CD4-positive, alpha-beta T cell (primary cell): ENCODE measurements at regions of chr10 and their contacts with region 1.

Region 1: GRCh38 chr10:5776136-5776880 is 36.9 kb downstream of the GDI2 start:
- DNase-seq: no peak
- ATAC-seq: peak; percentile 2
- H3K4me3 ChIP-seq: peak overlapping the region; percentile 25
- H3K4me3 Mint-ChIP-seq: peak overlapping the region; percentile 74
- H3K27ac ChIP-seq: peak overlapping the region; percentile 58 to 71
- H3K27ac Mint-ChIP-seq: peak overlapping the region; percentile 92
- H3K4me1 ChIP-seq: peaks cover 31% of the 10 kb centered on the region
- H3K4me1 Mint-ChIP-seq: peaks cover 64% of the 10 kb centered on the region
- H3K27me3 ChIP-seq: no peaks in the 10 kb centered on the region
- H3K27me3 Mint-ChIP-seq: no peaks in the 10 kb centered on the region
- CTCF ChIP-seq: no peak

Region 2: GRCh38 chr10:5551531-5552375 is 224.6 kb before region 1 on chr10:
- CTCF ChIA-PET with region 1: no interaction called
- POLR2A ChIA-PET with region 1: no interaction called
- intact Hi-C with region 1: no loop called
- DNase-seq: peak in 9 of 14 experiments; percentile 16 to 64 (median 34)
- ATAC-seq: no peak
- H3K4me3 ChIP-seq: no peak overlapping the region
- H3K4me3 Mint-ChIP-seq: peak overlapping the region; percentile 28
- H3K27ac ChIP-seq: no peak overlapping the region
- H3K27ac Mint-ChIP-seq: peak overlapping the region; percentile 91
- H3K4me1 ChIP-seq: peaks cover 62% of the 10 kb centered on the region
- H3K4me1 Mint-ChIP-seq: peaks cover 8% of the 10 kb centered on the region
- H3K27me3 ChIP-seq: no peaks in the 10 kb centered on the region
- H3K27me3 Mint-ChIP-seq: no peaks in the 10 kb centered on the region
- CTCF ChIP-seq: no peak

Region 3: GRCh38 chr10:5764422-5765297 is 11.6 kb before region 1 on chr10:
- CTCF ChIA-PET with region 1: interaction called, 4 read pairs
- POLR2A ChIA-PET with region 1: interaction called, 17 read pairs
- intact Hi-C with region 1: no loop called
- DNase-seq: no peak
- ATAC-seq: peak; percentile 39
- H3K4me3 ChIP-seq: no peak overlapping the region
- H3K4me3 Mint-ChIP-seq: no peak overlapping the region
- H3K27ac ChIP-seq: no peak overlapping the region
- H3K27ac Mint-ChIP-seq: peak overlapping the region; percentile 82
- H3K4me1 ChIP-seq: no peaks in the 10 kb centered on the region
- H3K4me1 Mint-ChIP-seq: peaks cover 10% of the 10 kb centered on the region
- H3K27me3 ChIP-seq: no peaks in the 10 kb centered on the region
- H3K27me3 Mint-ChIP-seq: no peaks in the 10 kb centered on the region
- CTCF ChIP-seq: no peak

Region 4: DNA sequence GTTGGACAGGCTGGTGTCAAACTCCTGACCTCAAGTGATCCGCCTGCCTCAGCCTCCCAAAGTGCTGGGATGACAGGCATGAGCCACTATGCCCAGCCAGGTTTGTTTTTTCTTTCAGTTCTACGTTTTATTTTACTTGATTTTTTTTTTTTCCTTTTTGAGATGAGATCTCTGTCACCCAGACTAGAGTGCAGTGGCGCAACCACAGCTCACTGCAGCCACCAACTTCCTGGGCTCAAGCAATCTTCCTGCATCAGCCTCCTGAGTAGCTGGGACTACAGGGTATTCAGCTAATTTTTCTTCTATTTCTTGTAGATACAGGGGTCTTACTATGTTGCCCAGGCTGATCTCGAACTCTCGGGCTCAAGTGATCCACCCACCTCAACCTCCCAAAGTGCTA is 12.7 kb after region 1 on chr10:
- CTCF ChIA-PET with region 1: no interaction called
- POLR2A ChIA-PET with region 1: interaction called, 17 read pairs
- intact Hi-C with region 1: loop called in 1 of 2 experiments (anchors 2 kb)
- DNase-seq: peak in 3 of 14 experiments; percentile 8 to 14 (median 11)
- ATAC-seq: peak; percentile 78
- H3K4me3 ChIP-seq: no peak overlapping the region
- H3K4me3 Mint-ChIP-seq: peak overlapping the region; percentile 48
- H3K27ac ChIP-seq: peak overlapping the region in 1 of 2 donors; percentile 21
- H3K27ac Mint-ChIP-seq: peak overlapping the region; percentile 88
- H3K4me1 ChIP-seq: peaks cover 10% of the 10 kb centered on the region
- H3K4me1 Mint-ChIP-seq: peaks cover 44% of the 10 kb centered on the region
- H3K27me3 ChIP-seq: no peaks in the 10 kb centered on the region
- H3K27me3 Mint-ChIP-seq: no peaks in the 10 kb centered on the region
- CTCF ChIP-seq: no peak

Region 5: DNA sequence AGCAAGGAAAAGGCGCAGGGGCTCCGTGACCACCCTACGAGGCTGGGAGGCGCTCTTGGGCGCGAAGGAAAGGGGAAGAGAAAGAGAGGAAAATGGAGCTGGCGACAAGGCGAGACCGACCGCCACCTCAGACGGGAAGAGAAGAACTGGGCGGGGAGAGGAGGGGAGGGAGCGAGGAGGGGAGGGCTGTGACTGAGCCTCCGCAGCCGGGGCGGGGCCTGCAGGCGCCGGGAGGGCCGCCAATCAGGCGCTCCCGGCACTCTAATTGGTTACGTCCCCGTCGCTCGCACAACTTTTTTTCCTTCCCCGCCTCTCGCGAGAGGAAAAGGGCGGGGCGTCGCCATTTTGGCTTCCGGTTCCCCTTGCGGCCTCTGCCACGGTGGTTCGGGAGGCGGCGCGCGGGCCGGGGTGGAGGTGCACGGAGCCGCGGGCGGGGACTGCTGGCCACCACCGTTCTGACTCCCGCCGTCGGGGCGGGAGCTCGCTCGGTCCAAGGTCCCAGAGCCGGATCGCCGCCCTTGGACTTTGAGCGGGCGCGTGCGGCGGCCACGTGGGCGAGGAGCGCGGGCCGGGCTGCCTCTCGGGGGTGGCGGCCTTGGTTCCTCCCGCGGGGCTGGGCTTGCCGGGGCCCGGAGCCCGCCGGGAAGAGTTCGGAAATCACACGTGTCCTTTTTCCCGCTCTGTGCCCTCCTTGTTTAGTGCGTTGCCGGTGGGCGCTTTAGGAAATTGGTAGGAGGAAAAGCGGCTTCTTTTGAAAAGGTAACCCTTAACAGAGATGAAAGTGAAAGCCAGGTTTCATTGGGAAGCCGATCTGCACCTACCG is 37.2 kb after region 1 on chr10 and contains the start of gene GDI2:
- CTCF ChIA-PET with region 1: no interaction called
- POLR2A ChIA-PET with region 1: interaction called, 29 read pairs
- intact Hi-C with region 1: loop called (anchors 1 to 5 kb)
- DNase-seq: peak; percentile 92 to 98 (median 96)
- ATAC-seq: peak; percentile 94
- H3K4me3 ChIP-seq: peak within 1 kb of the TSS; percentile 74
- H3K4me3 Mint-ChIP-seq: peak within 1 kb of the TSS; percentile 95
- H3K27ac ChIP-seq: peak within 1 kb of the TSS; percentile 92 to 97
- H3K27ac Mint-ChIP-seq: peak within 1 kb of the TSS; percentile 89
- H3K4me1 ChIP-seq: peaks cover 42% of the 10 kb centered on the region
- H3K4me1 Mint-ChIP-seq: peaks cover 60% of the 10 kb centered on the region
- H3K27me3 ChIP-seq: no peaks in the 10 kb centered on the region
- H3K27me3 Mint-ChIP-seq: no peaks in the 10 kb centered on the region
- CTCF ChIP-seq: no peak
- total RNA-seq, gene GDI2: 78.1 to 82.3 TPM